Activated T-helper 1 cell treated with anti-CD3 and anti-CD28 coated beads, Interleukin-12 subunit alpha, Interleukin-12 subunit beta, Interleukin-2, Interleukin-4 antibody, amounts not matched to agents 30 ng/mL and 10 ng/mL and 1 ng/mL, durations not matched to agents 14 hours and 24 hours and 36 hours (primary cell): ENCODE measurements at regions of chr6 and their contacts with region 1.

Region 1: GRCh38 chr6:13328076-13328874 is at the start of gene TBC1D7:
- DNase-seq: peak; percentile 93
- H3K4me3 Mint-ChIP-seq: peak within 1 kb of the TSS; percentile 84
- H3K27ac Mint-ChIP-seq: peak within 1 kb of the TSS; percentile 92
- H3K4me1 Mint-ChIP-seq: peaks cover 38% of the 10 kb centered on the region
- H3K27me3 Mint-ChIP-seq: peaks cover 2% of the 10 kb centered on the region
- total RNA-seq, gene TBC1D7: 27.3 and 28.2 TPM in 2 replicates

Region 2: DNA sequence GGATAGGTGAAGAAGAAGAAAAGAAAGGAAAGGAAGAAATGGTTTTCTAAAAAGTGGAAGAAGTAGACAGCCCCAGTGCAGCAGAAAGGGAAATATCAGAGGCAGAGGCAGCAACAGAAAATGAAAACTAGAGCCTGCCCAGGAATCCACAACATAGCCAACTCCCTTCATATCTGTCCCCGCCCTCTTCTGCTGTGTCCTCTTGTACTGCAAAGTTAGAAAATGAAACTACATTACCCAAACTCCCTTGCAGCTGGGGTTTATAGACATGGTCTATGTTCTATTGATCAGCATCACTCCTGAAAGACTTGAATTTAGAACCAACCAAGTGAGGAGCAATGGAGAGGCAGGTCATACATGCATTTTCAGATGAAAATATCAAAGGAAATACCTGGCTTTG is 812.2 kb before region 1 on chr6:
- intact Hi-C with region 1: no loop called
- DNase-seq: no peak
- H3K4me3 Mint-ChIP-seq: no peak overlapping the region
- H3K27ac Mint-ChIP-seq: no peak overlapping the region
- H3K4me1 Mint-ChIP-seq: no peaks in the 10 kb centered on the region
- H3K27me3 Mint-ChIP-seq: peaks cover 2% of the 10 kb centered on the region

Region 3: DNA sequence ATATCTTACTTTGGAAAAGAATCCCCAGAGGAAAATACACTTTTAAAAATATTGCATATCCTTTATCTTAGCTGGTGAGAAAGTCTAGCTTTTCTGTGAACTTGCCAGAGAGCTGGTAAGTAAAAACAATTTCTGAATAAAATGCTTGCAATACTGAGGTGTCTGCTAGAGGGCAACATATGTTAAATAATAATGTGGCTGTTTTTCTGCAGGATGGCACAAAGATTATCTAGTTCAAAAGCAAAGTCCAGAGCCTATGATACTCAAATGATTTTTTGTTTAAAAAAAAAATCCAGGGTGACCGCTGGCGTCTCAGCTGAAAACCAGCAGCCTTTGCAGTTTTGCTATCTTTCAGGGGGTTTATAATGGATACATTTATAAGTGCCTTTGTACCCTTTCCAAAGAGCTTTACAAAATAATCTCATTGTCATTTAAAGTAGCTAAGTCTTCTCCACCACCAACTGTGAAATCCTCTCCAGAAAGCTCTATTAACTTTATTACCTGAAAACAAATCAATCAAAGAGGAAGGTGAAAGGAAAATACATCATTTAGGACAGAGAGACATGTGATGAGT is 416.8 kb before region 1 on chr6:
- intact Hi-C with region 1: loop called (anchors 1 kb)
- DNase-seq: no peak
- H3K4me3 Mint-ChIP-seq: no peak overlapping the region
- H3K27ac Mint-ChIP-seq: no peak overlapping the region
- H3K4me1 Mint-ChIP-seq: no peaks in the 10 kb centered on the region
- H3K27me3 Mint-ChIP-seq: peaks cover 4% of the 10 kb centered on the region

Region 4: DNA sequence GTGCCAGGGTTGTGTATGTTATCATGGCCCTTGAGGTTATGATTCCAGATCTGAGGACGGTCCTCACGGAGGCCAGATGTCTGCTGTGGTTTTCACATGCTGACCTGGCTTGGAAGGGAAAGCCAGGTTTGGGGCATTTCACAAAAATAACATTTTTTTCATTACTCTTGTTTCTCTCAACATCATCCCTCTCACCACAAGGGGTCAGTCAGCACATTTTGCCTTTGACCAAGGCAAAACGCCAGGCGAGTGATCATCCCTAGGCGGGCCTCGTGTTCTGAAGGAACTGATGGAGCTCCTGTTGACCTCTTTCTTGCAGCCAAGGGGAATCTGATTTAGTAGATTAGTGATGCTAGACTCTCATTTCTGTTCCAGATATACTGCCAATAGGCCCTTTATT is 133.4 kb before region 1 on chr6:
- intact Hi-C with region 1: loop called (anchors 1 kb)
- DNase-seq: no peak
- H3K4me3 Mint-ChIP-seq: no peak overlapping the region
- H3K27ac Mint-ChIP-seq: no peak overlapping the region
- H3K4me1 Mint-ChIP-seq: no peaks in the 10 kb centered on the region
- H3K27me3 Mint-ChIP-seq: peaks cover 23% of the 10 kb centered on the region

Region 5: DNA sequence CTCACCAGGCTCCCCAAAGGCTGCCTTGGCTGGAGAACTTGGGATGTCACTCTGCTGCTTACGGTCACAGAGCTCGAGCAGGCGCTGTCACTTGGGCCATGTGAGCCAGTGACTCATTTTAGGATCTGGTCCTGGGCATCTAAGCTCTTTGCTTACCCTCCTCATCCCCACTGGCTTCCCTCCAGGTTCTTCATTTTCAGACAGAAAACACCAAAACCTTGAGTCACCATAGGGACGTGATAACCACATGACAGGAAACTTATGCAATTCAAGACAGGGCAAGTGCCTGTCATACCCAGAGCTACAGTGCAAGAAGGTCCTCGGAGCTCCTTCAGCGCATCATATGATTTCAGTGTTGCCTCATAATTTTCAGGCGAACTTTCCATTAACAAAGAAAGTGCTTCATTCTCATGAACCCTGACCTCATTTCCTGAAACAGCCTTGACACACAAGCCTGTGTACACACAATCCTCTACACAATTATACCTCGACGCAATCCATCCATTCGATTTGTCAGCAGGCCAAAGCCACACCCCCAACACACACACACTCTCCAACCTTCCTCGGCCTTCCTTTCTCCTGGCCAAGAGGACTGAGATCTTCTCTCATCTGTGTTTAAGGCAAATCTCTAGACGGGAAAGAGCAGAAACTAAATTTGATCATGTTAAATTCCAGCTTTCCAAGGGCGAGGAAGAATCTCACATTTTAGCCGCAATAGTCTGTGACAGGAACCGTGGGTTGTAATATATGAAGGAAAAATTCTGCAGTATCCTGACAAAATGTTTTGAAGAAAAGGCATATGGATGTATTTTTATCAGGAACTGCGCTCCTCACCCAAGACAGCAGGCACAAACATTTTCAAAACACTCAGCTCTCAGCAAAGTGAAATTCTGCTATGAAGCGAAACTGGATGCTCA is 25.3 kb before region 1 on chr6:
- intact Hi-C with region 1: loop called (anchors 1 kb)
- DNase-seq: peak; percentile 65
- H3K4me3 Mint-ChIP-seq: peak overlapping the region; percentile 61
- H3K27ac Mint-ChIP-seq: peak overlapping the region; percentile 87
- H3K4me1 Mint-ChIP-seq: peaks cover 43% of the 10 kb centered on the region
- H3K27me3 Mint-ChIP-seq: no peaks in the 10 kb centered on the region

Region 6: DNA sequence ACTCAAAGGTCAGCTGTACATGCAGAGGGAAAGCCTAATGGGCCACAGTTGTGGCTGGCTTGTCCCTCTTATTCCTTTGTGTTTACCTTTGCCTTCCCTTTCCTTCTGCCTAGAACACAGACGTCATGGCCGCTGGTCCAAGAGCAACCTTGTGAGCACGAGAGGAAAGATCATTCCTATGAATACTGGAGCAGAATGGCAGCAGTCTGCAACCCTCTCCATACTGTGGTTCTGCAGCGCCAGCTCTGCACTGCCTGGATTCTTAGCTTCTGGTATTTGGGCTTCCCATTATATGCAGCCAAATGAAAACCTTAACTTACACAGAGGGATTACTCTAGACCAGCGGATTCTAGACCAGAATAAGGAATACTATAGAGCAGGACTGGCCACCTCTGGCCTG is 12.4 kb before region 1 on chr6:
- intact Hi-C with region 1: no loop called
- DNase-seq: no peak
- H3K4me3 Mint-ChIP-seq: no peak overlapping the region
- H3K27ac Mint-ChIP-seq: no peak overlapping the region
- H3K4me1 Mint-ChIP-seq: no peaks in the 10 kb centered on the region
- H3K27me3 Mint-ChIP-seq: no peaks in the 10 kb centered on the region

Region 7: DNA sequence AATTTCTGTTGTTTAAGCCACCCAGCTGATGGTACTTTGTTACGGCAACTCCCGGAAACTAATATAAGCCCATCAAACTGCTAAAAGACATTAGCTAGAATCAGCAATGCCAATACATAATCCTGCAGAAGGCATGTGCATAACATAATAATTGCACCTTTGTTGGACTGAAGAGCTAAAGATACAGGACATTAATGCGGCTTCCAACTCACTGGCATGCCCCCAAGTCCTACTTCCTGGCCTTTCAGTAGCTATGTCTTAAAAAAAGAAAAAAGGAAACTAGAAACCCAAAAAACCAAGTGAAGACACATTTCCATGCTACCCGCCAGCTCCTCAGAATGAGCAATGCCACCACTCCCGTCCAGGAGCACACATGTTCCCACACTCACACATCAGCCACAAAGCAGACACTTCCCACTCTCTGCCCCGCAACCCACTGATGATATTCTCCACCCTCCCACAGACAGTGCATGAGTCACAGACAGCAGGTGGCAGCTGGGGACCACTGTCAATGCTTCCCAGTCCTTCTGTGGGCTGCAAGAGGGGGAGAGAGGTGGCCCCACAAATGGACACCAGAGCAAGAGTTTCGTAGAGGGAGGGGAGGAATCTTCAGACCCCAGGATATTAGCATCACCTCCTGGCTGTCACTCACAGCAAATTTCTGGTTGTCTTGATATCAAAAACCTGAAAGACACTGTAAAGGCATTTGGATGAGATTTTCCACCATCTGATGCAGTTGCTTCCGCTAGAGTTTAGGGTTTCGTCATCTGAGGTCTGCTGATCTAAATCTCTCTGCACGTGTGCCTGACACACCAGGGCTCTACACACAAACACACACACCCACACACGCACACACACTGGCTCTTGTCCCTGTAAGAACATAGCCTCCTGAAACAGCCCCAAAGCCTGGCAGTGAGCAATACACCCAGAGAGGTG is 126.3 kb after region 1 on chr6:
- intact Hi-C with region 1: loop called (anchors 1 kb)
- DNase-seq: peak; percentile 55
- H3K4me3 Mint-ChIP-seq: peak overlapping the region; percentile 27
- H3K27ac Mint-ChIP-seq: peak overlapping the region; percentile 88
- H3K4me1 Mint-ChIP-seq: peaks cover 55% of the 10 kb centered on the region
- H3K27me3 Mint-ChIP-seq: peaks cover 1% of the 10 kb centered on the region

Region 8: GRCh38 chr6:13614926-13615798 is 286.9 kb after region 1 on chr6 and contains the start of gene NOL7:
- intact Hi-C with region 1: loop called (anchors 1 kb)
- DNase-seq: peak; percentile 98
- H3K4me3 Mint-ChIP-seq: peak within 1 kb of the TSS; percentile 99
- H3K27ac Mint-ChIP-seq: peak within 1 kb of the TSS; percentile 87
- H3K4me1 Mint-ChIP-seq: peaks cover 54% of the 10 kb centered on the region
- H3K27me3 Mint-ChIP-seq: no peaks in the 10 kb centered on the region
- total RNA-seq, gene NOL7: 97.7 and 100 TPM in 2 replicates